ENCODE measurements at regions of chr17 and their contacts with region 1.

Region 1: GRCh38 chr17:74961657-74962490 is 10.7 kb downstream of the HID1 start:
- DNase-seq: peak; percentile 88
- H3K4me3 Mint-ChIP-seq: no peak overlapping the region
- H3K27ac Mint-ChIP-seq: no peak overlapping the region
- H3K4me1 Mint-ChIP-seq: peaks cover 4% of the 10 kb centered on the region
- H3K27me3 Mint-ChIP-seq: no peaks in the 10 kb centered on the region

Region 2: DNA sequence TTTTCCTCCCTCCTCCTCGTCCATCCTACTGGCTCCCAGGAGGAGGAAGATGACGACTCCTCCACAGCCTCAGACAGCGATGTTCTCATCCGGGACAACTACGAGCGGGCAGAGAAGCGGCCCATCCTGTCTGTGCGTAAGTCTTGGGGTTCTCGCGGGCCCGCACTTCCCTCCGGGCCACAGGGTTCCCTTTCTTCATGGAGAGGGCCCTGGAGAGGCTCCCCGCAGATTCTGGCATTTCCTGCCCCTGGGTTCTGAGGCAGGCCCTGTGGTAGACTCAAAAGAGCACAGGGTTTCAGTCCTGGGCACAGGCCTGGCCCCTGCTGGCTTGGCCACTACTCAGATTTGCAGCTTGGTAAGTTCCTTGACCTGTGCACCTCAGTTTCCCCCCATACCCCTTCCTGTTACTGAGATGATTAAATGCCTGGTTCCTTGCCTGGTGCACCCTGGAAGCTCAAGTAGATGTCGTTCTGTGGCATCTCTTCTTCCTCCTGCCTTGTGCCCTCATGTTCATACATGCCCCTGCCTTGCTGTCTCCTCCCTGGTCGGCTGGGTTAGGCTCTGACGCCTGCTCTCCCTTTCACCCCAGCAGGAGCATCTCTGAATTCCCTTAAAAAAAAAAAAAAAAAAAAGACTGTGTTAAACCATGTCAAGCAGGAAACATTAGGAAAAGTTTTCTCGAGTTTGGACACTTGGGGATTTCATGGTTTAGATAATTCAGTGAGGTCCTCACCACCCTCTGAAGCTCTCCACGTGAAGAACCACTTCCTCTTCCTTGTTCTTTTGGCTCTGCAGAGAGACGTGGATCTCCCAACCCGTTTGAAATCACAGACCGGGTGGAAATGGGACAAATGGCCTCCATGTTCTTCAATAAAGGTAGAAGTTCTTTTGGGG is 171.5 kb before region 1 on chr17:
- CTCF ChIA-PET with region 1: interaction called, 14 read pairs
- POLR2A ChIA-PET with region 1: interaction called, 6 read pairs
- DNase-seq: peak; percentile 16
- H3K4me3 Mint-ChIP-seq: peak overlapping the region; percentile 39
- H3K27ac Mint-ChIP-seq: peak overlapping the region; percentile 85
- H3K4me1 Mint-ChIP-seq: peaks cover 35% of the 10 kb centered on the region
- H3K27me3 Mint-ChIP-seq: no peaks in the 10 kb centered on the region

Region 3: GRCh38 chr17:74950207-74950606 is 11.7 kb before region 1 on chr17:
- CTCF ChIA-PET with region 1: interaction called, 15 read pairs
- POLR2A ChIA-PET with region 1: no interaction called
- DNase-seq: no peak
- H3K4me3 Mint-ChIP-seq: no peak overlapping the region
- H3K27ac Mint-ChIP-seq: no peak overlapping the region
- H3K4me1 Mint-ChIP-seq: no peaks in the 10 kb centered on the region
- H3K27me3 Mint-ChIP-seq: peaks cover 2% of the 10 kb centered on the region

Region 4: DNA sequence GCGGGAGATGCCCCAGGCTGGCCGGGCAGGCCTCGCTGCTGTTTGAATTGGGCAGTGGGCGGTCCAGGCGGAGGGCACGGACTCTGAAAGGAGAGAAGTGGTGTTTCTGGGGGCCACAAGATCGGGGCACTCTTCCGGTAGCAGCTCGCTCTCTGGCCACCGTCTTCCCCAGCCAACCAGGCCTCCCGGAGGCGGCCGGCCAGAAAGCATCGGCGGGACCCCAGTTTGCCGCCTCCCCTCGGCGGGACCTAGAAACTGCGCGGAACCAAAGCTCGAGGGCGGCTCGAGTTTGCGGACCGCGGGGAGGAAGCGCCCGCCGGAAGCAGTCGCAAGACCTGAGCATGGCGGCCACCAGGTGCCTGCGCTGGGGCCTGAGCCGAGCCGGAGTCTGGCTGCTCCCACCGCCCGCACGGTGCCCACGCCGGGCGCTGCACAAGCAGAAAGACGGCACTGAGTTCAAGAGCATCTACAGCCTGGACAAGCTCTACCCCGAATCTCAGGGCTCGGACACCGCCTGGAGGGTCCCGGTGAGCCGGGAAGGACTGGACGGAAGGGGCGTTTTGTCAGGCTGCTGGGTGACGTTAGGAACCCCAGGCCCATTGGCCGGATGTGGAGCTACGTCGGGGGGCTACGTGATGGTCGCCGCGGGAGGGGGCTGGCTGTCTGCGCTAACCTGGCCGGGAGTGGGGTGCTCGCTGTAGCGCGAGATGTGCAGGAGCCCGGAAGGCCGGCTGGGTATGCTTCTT is 50.6 kb after region 1 on chr17 and contains the start of gene MRPL58:
- CTCF ChIA-PET with region 1: interaction called, 27 read pairs
- POLR2A ChIA-PET with region 1: no interaction called
- DNase-seq: peak; percentile 83
- H3K4me3 Mint-ChIP-seq: peak within 1 kb of the TSS; percentile 97
- H3K27ac Mint-ChIP-seq: peak within 1 kb of the TSS; percentile 95
- H3K4me1 Mint-ChIP-seq: peaks cover 32% of the 10 kb centered on the region
- H3K27me3 Mint-ChIP-seq: no peaks in the 10 kb centered on the region
- total RNA-seq, gene MRPL58: 41.2 to 46.2 TPM

Region 5: DNA sequence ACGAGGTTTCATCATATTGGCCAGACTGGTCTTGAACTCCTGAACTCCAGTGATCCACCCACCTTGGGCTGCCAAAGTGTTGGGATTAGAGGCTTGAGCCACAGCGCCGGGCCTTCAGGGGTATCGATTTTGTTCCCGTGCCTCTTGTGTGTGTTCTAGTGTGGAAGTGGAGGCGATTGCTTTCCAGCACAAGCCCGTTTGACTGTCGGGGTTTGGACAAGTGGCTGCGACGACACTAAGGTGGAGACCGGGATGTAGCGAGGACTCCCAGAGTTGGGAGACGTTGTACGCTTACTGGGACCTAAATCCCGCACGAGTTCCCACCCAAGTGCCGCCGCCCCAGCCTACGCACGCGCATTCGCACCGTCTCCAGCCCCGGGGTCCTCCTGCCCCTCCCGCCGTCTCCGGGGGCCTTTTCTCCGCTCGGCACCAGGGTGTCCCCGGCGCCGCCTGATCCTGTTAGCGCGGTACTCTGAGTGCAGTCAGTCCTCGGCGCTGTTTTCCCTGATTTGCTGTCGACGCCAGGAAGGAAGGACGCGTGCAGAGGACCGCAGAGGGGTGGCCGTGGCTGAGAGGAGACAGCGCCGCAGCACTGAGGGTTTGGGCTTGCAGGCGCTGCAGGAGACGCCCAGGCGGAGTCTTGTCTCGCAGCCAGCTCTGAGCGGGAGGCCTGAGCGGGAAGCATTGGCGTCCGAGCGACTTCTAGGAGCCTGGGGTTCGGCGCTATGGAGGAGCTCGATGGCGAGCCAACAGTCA is 243.3 kb after region 1 on chr17 and contains the start of gene NUP85:
- CTCF ChIA-PET with region 1: interaction called, 25 read pairs
- POLR2A ChIA-PET with region 1: no interaction called
- DNase-seq: peak; percentile 93
- H3K4me3 Mint-ChIP-seq: peak within 1 kb of the TSS; percentile 98
- H3K27ac Mint-ChIP-seq: peak within 1 kb of the TSS; percentile 100
- H3K4me1 Mint-ChIP-seq: peaks cover 30% of the 10 kb centered on the region
- H3K27me3 Mint-ChIP-seq: no peaks in the 10 kb centered on the region
- total RNA-seq, gene NUP85: 140 to 172 TPM

Measured in activated CD4-positive, alpha-beta T cell treated with anti-CD3 and anti-CD28 coated beads, Interleukin-2, amount 10 ng/mL, durations not matched to agents 7 days and 5 days (primary cell).